H1 (cell line): ENCODE measurements at regions of chr14 and their contacts with region 1.

Region 1: DNA sequence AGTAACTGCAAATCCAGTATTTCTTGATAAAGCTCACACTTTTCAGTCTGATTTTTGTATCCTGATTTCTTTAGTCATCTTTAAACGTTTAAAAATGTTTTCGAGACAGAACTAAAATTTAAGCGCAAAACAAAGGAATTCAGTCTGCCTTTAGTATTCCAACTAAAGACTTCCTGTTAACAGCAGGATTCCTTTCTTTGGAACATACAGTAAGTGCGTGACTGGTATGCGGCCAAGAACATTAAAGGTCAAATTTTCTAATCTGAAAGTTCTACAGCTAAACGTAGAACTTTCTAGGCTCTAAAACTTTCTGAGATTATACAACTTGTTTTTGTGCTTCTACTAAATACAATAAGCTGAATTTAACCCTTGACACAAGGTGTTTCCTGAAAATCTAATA is 9.9 kb downstream of the SAV1 start:
- DNase-seq: no peak
- H3K4me3 ChIP-seq: peak overlapping the region in 1 of 4 experiments; percentile 41; a peak in 2 of 8 replicates
- H3K27ac ChIP-seq: no peak overlapping the region
- H3K4me1 ChIP-seq: peaks cover 0 to 5% (median 1%) of the 10 kb centered on the region in 4 experiments; a peak in 3 of 7 replicates
- H3K27me3 ChIP-seq: no peaks in the 10 kb centered on the region
- CTCF ChIP-seq: no peak
- EP300 ChIP-seq: no peak
- POLR2A ChIP-seq: no peak
- RAD21 ChIP-seq: no peak

Region 2: GRCh38 chr14:50573858-50574257 is 84.3 kb before region 1 on chr14:
- CTCF ChIA-PET with region 1: no interaction called
- POLR2A ChIA-PET with region 1: no interaction called
- DNase-seq: no peak
- H3K4me3 ChIP-seq: no peak overlapping the region
- H3K27ac ChIP-seq: no peak overlapping the region
- H3K4me1 ChIP-seq: no peaks in the 10 kb centered on the region
- H3K27me3 ChIP-seq: no peaks in the 10 kb centered on the region
- CTCF ChIP-seq: no peak
- EP300 ChIP-seq: no peak
- POLR2A ChIP-seq: no peak
- RAD21 ChIP-seq: no peak

Region 3: DNA sequence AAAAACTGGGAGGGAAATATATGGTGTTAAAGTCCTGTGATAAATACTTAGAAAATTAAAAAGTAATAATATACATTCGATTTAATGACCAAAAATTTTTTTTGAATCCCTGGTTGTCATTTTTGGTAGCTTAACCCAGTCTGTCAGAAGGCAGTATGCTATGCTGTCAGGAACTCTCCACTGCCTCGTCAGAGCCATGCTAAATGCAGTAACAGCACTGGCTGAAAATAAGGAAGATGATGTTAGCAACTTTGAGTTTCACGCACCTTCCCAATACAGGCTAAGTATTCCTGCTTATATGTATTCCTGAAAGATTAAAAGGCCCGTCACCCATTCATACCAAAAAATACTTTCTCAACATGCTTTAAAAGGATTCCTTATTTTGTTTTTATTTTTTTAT is 24.2 kb before region 1 on chr14:
- CTCF ChIA-PET with region 1: no interaction called
- POLR2A ChIA-PET with region 1: no interaction called
- DNase-seq: no peak
- H3K4me3 ChIP-seq: no peak overlapping the region
- H3K27ac ChIP-seq: no peak overlapping the region
- H3K4me1 ChIP-seq: no peaks in the 10 kb centered on the region
- H3K27me3 ChIP-seq: no peaks in the 10 kb centered on the region
- CTCF ChIP-seq: no peak
- EP300 ChIP-seq: no peak
- POLR2A ChIP-seq: no peak
- RAD21 ChIP-seq: no peak

Region 4: GRCh38 chr14:50647282-50647681 is 10.9 kb before region 1 on chr14:
- CTCF ChIA-PET with region 1: no interaction called
- POLR2A ChIA-PET with region 1: interaction called, 10 read pairs
- DNase-seq: no peak
- H3K4me3 ChIP-seq: no peak overlapping the region
- H3K27ac ChIP-seq: no peak overlapping the region
- H3K4me1 ChIP-seq: 0 out of 7 replicates have a peak, but pooled peaks cover 0 to 5% (median under 1%) of the 10 kb centered on the region in 4 experiments
- H3K27me3 ChIP-seq: no peaks in the 10 kb centered on the region
- CTCF ChIP-seq: no peak
- EP300 ChIP-seq: no peak
- POLR2A ChIP-seq: no peak
- RAD21 ChIP-seq: no peak

Region 5: DNA sequence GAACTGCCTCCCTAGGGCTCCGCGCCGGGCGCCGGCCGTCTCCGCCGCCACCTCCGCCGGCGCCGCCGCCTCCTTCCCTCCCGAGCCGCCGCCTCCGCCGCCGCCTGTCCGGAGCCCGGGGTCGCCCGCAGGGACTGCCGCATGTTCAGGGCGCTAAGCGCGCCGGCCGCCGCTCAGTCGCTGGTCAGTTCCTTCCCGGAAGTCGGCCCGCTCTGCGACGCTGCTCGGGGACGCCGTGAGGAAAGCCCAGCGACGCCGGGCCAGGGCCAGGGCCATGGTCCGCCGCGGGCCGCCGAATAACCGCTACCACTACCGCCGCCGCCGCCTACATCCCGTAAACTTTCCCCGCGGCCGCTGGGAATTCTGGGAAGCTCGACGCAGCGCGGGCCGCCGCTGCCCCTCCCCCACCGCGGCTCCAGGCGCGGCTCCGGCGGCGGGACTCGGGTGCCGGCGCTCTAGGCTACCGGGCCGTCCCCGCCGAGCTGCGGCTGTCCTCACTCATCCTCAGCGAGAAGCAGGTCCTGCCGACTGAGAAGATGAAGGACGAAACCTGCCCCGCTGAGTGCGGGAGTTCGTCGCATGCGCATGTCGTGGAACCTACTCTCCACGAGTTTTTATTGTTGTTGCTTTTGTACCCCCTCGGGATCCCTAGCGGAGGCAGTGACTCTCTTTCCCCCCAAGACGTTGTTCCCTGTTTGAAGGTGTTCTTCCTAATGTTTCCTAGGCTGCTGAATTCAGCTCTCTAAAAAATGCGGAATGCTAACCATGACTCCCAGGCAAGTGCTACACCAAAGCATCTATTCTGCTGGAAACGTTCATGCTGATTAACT is 10.0 kb after region 1 on chr14 and contains the start of gene SAV1:
- CTCF ChIA-PET with region 1: no interaction called
- POLR2A ChIA-PET with region 1: interaction called, 70 read pairs
- DNase-seq: peak in 1 of 2 experiments; percentile 87
- H3K4me3 ChIP-seq: peak within 1 kb of the TSS; percentile 72 to 97 (median 87)
- H3K27ac ChIP-seq: peak within 1 kb of the TSS; percentile 91
- H3K4me1 ChIP-seq: peaks cover 7 to 17% (median 12%) of the 10 kb centered on the region in 4 experiments
- H3K27me3 ChIP-seq: no peaks in the 10 kb centered on the region
- CTCF ChIP-seq: no peak; a peak in 1 of 4 replicates
- EP300 ChIP-seq: peak; percentile 7 to 59; a peak in 2 of 3 replicates
- POLR2A ChIP-seq: peak; percentile 68 to 93
- RAD21 ChIP-seq: no peak; a peak in 1 of 4 replicates
- total RNA-seq, gene SAV1: 72.5 and 78.3 TPM in 2 replicates